ENCODE measurements at regions of chr2 and their contacts with region 1.

Region 1: GRCh38 chr2:133477616-133477990 is 90.7 kb downstream of the NCKAP5 start:
- DNase-seq: no peak
- ATAC-seq: no peak

Region 2: DNA sequence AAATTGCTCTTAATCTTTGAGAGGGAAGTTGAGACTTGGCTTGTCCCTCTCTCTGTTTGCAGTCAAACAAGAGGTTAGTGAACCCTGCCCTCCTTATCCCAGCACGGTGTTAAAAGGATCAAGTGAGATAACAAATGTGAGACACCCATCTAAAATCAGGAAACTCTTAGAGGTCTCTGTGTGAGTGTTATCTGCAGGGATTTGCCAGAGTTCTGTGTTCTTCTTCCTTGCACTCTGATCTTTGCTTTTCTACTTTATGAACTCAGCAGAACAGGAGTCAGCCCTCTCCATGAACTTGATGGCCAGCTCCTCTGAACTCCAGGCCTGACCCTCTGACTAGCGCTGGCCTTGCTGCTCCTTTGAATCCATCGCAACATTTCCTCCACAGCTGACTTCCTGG is 33.1 kb before region 1 on chr2:
- intact Hi-C with region 1: loop called (anchors 5 kb)
- DNase-seq: no peak
- ATAC-seq: no peak

Measured in left ventricle myocardium superior (tissue), 1 donor.